PC-9 (cell line): ENCODE measurements at regions of chr17 and their contacts with region 1.

Region 1: DNA sequence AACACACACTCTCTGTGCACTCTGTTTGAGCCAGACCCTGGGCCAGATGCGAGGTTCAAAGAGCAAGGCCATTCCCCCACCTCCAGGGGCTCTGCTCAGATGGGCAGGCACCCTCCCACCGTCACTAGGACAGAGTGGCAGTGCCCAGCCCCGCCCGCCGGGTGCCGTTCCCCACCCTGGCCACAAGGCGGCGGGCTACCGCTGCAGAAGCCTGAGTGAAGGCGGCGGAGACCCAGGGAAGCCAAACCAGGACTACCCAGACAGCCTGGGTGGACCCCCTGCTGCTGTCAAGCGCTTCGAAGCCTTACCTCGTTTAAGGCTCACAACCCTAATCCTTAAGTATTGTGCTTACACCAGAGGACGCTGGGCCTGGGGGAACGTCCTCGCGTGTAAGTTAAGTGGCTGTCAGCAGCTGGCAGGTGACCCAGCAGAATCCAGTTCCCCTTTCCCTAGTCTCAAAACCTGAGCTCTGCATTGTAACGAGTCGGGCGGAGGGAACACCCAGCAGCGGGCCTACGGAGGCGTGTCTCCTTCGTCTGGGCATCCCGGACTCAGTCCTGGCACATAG is 4.5 kb downstream of the ARHGAP27 start:
- DNase-seq: peak; percentile 63 to 79
- H3K4me3 ChIP-seq: no peak overlapping the region
- H3K27ac ChIP-seq: no peak overlapping the region
- H3K4me1 ChIP-seq: peaks cover 37% of the 10 kb centered on the region
- H3K27me3 ChIP-seq: no peaks in the 10 kb centered on the region
- CTCF ChIP-seq: peak; percentile 99

Region 2: DNA sequence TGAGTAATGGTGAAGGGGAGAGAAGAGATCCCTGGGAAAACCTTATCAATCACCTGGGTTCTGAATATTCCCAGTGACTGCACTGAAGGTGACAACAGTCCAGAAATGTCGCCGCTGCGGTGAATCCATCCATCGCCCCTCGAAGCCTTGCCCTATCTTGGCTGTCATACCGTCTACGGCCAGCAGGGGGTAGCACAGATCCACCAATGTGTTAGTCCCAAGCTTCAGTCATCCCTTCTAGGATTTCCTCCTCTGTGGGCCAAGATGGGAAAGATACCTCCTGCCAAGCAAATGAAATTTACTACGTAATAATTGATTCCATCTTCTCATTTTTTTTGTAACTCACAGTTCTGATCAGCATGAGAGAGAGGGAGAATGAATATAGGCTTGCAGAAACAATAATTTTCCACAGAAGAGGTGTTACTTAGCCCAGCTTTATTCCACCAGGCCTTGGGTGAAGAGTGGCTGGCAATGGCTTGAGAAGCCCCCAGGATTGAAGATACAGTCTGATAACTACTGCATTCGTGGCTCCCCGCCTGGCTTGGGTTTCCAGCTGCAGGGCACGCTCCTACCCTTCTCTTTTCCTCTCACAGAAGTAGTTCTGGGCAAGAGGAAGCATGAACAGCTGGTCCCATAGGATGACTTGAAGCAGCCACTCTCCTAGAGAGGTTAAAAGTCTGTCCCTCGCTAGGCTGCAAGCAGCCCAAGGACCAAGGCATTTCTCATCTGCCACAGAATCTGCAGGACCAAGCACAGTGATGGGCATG is 209.1 kb before region 1 on chr17:
- CTCF ChIA-PET with region 1: interaction called, 8 read pairs
- POLR2A ChIA-PET with region 1: interaction called, 20 read pairs
- intact Hi-C with region 1: loop called (anchors 5 kb)
- DNase-seq: peak; percentile 57 to 80
- H3K4me3 ChIP-seq: no peak overlapping the region
- H3K27ac ChIP-seq: no peak overlapping the region
- H3K4me1 ChIP-seq: peaks cover 8% of the 10 kb centered on the region; the same call in 1 of the 2 replicates
- H3K27me3 ChIP-seq: no peaks in the 10 kb centered on the region
- CTCF ChIP-seq: peak; percentile 98

Region 3: DNA sequence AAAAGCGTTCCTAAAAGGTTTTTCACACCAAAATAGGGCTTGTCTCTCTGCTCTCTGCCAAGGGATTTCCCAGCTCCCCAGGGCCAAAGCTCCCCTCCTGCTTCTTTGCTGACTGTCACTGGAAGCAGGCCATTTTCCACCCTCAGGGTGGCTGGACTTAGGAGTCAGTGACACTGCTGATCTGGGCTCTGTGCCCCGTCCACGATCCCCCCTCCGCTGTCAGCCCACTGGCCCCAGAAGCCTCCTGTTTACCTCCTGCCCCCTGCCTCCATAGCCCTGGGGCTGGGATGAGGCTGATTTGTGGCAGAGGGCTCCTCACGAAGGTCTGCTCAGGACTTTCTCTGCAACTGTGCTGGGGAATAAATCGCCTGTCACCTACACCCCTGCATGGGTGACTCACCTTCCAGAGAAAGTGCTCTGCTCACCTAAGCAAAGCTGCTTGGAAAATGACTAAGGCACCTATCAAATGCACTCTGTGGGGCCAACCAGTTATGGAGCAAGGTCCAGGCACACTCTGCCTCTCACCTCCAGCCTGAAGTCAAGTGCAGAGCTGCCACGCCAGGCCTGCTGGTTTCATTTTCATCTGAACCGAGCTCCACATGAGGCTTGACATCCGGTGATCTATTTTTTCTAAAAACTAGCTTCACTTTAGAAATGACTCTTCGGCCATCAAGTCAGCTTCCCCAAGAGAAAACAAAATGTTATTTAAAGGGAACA is 116.2 kb before region 1 on chr17:
- CTCF ChIA-PET with region 1: interaction called, 11 read pairs
- POLR2A ChIA-PET with region 1: interaction called, 5 read pairs
- intact Hi-C with region 1: no loop called
- DNase-seq: peak; percentile 80 to 99
- H3K4me3 ChIP-seq: peak overlapping the region; percentile 40
- H3K27ac ChIP-seq: peak overlapping the region; percentile 80
- H3K4me1 ChIP-seq: peaks cover 77% of the 10 kb centered on the region
- H3K27me3 ChIP-seq: no peaks in the 10 kb centered on the region
- CTCF ChIP-seq: no peak

Region 4: DNA sequence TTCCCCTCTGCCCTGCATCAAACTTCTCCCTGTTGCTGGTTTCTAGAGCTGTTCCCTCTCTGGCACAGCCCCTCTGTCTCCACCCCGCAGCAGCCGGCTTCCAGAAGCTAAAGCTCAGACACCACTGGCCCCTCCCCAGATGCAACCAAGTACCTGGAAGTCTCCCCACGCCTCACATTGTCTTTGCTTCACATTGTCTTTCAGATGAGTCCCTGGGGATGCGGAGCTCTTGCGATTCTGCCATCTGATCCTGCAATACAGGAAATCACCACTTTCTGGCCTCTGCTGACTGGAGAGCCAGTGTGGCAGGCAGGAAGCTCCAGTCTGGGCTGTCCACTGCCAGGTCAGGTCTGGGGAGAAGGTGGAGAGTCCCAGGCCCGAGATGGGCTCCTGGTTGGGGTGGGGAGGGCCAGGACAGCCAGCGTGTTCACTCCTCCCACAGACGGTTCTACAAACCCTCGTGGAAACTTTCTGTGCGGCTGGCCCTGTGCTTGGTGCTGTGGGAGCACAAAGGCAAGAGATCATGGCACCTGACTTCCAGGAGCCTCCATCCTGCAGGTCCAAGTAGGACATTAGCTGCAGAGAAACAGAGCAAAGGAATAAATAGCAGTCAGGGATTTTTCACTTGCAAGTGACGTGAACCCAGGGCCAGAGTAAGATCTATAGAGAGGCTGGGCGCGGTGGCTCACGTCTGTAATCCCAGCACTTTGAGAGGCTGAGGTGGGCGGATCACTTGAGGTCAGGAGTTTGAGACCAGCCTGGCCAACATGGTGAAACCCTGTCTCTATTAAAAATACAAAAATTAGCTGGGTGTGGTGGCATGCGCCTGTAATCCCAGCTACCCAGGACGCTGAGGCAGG is 63.4 kb before region 1 on chr17:
- CTCF ChIA-PET with region 1: no interaction called
- POLR2A ChIA-PET with region 1: no interaction called
- intact Hi-C with region 1: no loop called
- DNase-seq: no peak
- H3K4me3 ChIP-seq: no peak overlapping the region
- H3K27ac ChIP-seq: no peak overlapping the region
- H3K4me1 ChIP-seq: peaks cover 14% of the 10 kb centered on the region
- H3K27me3 ChIP-seq: no peaks in the 10 kb centered on the region
- CTCF ChIP-seq: no peak

Region 5: GRCh38 chr17:45394913-45395568 is 33.1 kb before region 1 on chr17:
- CTCF ChIA-PET with region 1: no interaction called
- POLR2A ChIA-PET with region 1: no interaction called
- intact Hi-C with region 1: loop called (anchors 2 kb)
- DNase-seq: peak in 1 of 2 experiments; percentile 36
- H3K4me3 ChIP-seq: no peak overlapping the region
- H3K27ac ChIP-seq: no peak overlapping the region
- H3K4me1 ChIP-seq: no peaks in the 10 kb centered on the region
- H3K27me3 ChIP-seq: no peaks in the 10 kb centered on the region
- CTCF ChIP-seq: peak; percentile 88

Region 6: GRCh38 chr17:45413498-45413923 is 14.6 kb before region 1 on chr17:
- CTCF ChIA-PET with region 1: no interaction called
- POLR2A ChIA-PET with region 1: no interaction called
- intact Hi-C with region 1: no loop called
- DNase-seq: no peak
- H3K4me3 ChIP-seq: no peak overlapping the region
- H3K27ac ChIP-seq: no peak overlapping the region
- H3K4me1 ChIP-seq: no peaks in the 10 kb centered on the region
- H3K27me3 ChIP-seq: no peaks in the 10 kb centered on the region
- CTCF ChIP-seq: no peak

Region 7: GRCh38 chr17:45834471-45835396 is 406.6 kb after region 1 on chr17:
- CTCF ChIA-PET with region 1: no interaction called
- POLR2A ChIA-PET with region 1: no interaction called
- intact Hi-C with region 1: loop called (anchors 10 kb)
- DNase-seq: peak; percentile 32 to 52
- H3K4me3 ChIP-seq: no peak overlapping the region
- H3K27ac ChIP-seq: no peak overlapping the region
- H3K4me1 ChIP-seq: no peaks in the 10 kb centered on the region
- H3K27me3 ChIP-seq: peaks cover 79% of the 10 kb centered on the region
- CTCF ChIP-seq: no peak